Calu3 (cell line): ENCODE measurements at regions of chr14 and their contacts with region 1.

Region 1: DNA sequence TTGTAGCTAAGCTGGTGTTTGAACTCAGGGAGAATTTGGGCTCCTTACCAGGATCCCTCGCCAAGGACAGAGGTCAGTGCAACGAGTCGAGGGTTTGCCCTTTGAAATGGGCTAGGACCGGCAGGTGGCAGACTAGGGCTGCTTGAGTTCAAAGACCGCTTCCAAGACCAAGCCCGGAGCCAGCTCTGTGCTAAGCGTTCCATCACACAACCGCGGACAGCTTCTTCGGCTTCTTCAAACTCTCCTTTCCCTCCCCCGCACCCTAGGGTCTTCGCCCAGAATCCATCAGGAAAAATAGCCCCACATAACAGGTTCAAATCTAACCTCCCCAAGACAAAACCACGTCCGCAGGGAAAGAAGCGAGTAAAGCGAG is 705 bp upstream of the FLVCR2 start:
- DNase-seq: peak; percentile 78
- H3K4me3 Mint-ChIP-seq: peak overlapping the region; percentile 74
- H3K27ac Mint-ChIP-seq: no peak overlapping the region
- H3K4me1 Mint-ChIP-seq: peaks cover 9% of the 10 kb centered on the region
- H3K27me3 Mint-ChIP-seq: no peaks in the 10 kb centered on the region
- CTCF ChIP-seq: peak; percentile 61

Region 2: DNA sequence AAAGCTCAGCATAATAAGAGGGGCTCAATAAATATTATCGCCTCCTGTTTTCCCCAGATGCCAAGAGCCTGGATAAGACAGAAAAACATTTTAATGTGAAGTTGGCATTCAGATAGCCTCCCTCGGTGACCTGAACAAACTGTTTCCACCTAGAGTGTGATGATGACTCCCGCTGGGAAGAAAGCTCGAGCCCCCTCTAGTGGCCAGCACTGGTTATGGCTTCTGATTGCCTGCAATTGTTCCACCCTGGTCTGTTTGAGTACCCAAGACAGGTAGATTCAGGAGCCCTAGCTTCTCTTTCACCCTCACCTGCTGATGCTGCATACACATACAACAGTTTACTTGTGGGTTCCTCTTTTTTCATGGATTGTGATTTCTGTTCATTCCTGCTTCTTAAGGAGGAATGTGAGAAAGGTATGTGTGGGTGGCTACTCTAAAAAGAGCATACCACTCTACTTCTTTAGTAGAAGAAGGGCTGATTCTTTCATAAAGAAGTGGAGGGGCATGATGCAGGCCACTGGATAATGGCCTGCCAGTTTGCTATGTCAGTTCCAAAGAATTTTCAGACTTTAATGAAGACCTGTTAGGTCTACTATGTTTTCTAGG is 76.5 kb after region 1 on chr14:
- CTCF ChIA-PET with region 1: interaction called, 33 read pairs
- intact Hi-C with region 1: loop called (anchors 1 kb)
- DNase-seq: peak; percentile 82
- H3K4me3 Mint-ChIP-seq: no peak overlapping the region
- H3K27ac Mint-ChIP-seq: no peak overlapping the region
- H3K4me1 Mint-ChIP-seq: no peaks in the 10 kb centered on the region
- H3K27me3 Mint-ChIP-seq: no peaks in the 10 kb centered on the region
- CTCF ChIP-seq: peak; percentile 74